BJ (cell line): ENCODE measurements at regions of chr5 and their contacts with region 1.

Region 1: DNA sequence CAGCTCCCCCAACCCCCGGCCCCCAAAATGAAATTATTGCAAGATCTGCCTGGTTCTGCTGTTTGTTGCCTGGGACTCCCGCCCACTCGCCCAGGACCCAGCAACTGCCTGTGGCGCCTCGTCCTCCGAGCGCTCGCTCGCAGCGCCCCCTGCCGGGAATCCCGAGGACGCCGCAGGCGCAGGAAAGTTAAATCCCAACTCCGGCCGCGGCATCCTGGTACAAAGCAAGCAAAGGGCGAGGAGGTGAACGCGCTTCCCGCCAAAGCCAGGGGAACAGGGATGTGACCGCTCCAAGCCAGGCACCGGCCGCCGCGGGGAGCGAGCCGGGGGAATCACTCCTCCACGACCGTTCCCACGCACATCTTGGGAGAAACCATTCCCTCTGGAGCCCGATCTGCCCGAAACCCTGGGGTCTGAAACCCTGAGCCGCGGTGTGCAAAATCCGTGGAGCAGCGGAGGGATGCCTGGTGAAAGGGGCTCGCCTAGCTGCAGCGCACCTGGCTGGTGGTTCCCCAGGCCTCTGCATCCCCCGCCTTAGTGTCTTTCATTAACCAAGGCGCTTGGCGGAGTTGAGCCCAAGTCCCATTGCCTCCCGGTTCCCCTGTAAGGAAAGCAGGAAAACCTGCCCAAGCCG is 1.3 kb downstream of the SEMA5A start:
- DNase-seq: no peak
- H3K4me3 ChIP-seq: peak overlapping the region; percentile 90
- H3K27me3 ChIP-seq: no peaks in the 10 kb centered on the region
- CTCF ChIP-seq: peak; percentile 96

Region 2: DNA sequence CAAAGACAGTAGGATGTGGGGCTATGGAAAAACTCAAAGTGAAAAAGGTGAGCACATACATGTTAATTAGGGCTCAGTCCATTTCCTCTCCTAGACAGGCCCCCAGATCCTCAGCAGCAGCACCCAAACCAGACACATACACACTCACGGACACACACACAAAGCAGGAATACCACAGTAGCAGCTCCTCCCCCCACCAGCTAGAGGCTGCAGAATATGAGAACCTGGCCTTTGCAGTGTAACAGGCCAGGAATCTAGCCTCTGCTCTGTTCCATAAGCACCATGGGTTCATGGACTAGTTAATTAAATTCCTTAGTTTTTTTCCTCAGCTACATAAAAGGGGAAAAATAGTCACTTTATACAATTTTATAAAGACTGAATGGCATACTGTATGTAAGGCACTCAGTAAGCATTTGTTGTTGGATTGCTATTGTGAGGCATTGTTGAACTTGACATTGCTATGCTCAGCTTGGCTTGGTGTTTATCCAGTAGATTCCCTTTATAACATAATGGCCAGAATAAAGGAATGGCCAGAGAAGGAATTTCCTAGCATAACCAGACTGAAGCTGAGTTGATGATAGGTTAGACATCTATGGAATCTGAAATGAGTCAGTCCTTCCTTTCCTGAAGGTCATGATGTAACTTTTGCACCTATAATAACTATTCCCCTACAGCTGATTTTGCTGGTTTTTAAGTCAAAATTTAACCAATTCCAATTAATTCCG is 185.5 kb before region 1 on chr5:
- CTCF ChIA-PET with region 1: interaction called, 7 read pairs
- POLR2A ChIA-PET with region 1: interaction called, 15 read pairs
- DNase-seq: peak; percentile 51
- H3K4me3 ChIP-seq: no peak overlapping the region
- H3K27me3 ChIP-seq: no peaks in the 10 kb centered on the region
- CTCF ChIP-seq: no peak

Region 3: GRCh38 chr5:9529041-9529480 is 15.6 kb before region 1 on chr5:
- CTCF ChIA-PET with region 1: interaction called, 20 read pairs
- POLR2A ChIA-PET with region 1: no interaction called
- DNase-seq: no peak
- H3K4me3 ChIP-seq: no peak overlapping the region
- H3K27me3 ChIP-seq: no peaks in the 10 kb centered on the region
- CTCF ChIP-seq: no peak

Region 4: DNA sequence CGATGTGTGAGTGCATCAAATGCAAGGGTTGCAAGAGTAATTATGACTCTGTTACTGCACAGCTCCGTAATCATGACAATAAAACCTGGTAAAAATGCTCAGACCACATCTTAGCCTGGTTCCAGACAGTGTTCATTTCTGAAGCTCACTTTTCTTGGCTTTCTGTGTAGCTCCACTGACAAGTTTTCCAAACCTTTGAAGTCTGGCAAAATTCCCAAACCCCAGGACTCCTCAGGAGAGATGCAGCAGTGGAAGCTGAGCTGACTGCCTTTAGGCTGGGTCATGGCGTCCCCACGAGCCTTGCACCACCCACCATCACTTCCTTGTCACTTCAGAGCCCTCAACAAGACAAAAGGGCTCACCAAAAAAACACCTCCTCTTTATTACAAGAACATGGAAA is 217.1 kb after region 1 on chr5:
- CTCF ChIA-PET with region 1: no interaction called
- POLR2A ChIA-PET with region 1: no interaction called
- DNase-seq: no peak
- H3K4me3 ChIP-seq: no peak overlapping the region
- H3K27me3 ChIP-seq: no peaks in the 10 kb centered on the region
- CTCF ChIP-seq: no peak